Activated T-helper 2 cell treated with anti-CD3 and anti-CD28 coated beads, Interferon-gamma antibody, Interleukin-2, Interleukin-4, amounts not matched to agents 10 μg/mL and 5 μg/mL and 100 μg/mL, durations not matched to agents 14 hours and 24 hours and 36 hours (primary cell): ENCODE measurements at regions of chr9 and their contacts with region 1.

Region 1: GRCh38 chr9:36487482-36488388 is 85.0 kb upstream of the MELK start:
- DNase-seq: peak; percentile 89
- H3K4me3 Mint-ChIP-seq: peak overlapping the region; percentile 90
- H3K27ac Mint-ChIP-seq: peak overlapping the region; percentile 99
- H3K4me1 Mint-ChIP-seq: peaks cover 45% of the 10 kb centered on the region
- H3K27me3 Mint-ChIP-seq: no peaks in the 10 kb centered on the region

Region 2: DNA sequence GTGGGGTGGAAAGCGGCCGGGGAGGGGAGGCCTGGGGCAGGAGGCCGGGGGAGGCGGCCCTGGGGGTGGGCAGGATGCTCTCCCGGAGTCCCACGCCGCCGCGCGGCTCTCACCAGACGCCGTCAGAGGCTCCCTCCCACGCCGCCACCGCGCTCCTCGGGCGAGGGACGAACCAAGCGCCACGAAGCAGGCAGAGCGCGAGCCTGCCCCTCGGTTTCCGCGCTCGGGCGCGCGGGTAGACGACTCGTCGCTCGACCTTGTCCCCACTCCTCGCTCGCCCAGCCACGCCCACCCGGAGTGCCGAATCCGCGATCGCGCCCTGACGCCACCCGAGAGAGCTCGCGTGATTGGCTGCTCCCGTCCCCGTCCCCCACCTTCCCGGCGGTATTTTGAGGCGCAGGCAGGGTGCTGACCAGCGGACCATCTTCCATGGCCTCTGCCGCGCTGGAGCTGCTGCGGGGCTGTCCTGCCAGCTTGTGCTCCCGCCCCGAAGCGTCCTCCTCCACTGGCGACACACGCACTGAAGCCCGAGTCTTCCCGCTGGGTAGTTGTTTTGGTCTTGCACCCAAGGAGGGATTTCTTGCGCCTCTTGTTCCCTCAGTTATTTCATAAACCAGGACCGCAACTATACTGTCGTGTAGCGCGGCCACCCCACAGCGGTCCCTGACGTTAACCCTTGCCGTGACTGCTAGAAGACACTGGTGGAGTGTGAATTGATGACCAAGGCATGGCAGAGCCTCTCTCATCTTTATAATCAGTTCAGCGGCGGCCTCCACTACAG is 229.3 kb before region 1 on chr9 and contains the start of gene GNE:
- intact Hi-C with region 1: loop called (anchors 5 kb)
- DNase-seq: peak; percentile 97
- H3K4me3 Mint-ChIP-seq: peak within 1 kb of the TSS; percentile 86
- H3K27ac Mint-ChIP-seq: peak within 1 kb of the TSS; percentile 84
- H3K4me1 Mint-ChIP-seq: peaks cover 7% of the 10 kb centered on the region
- H3K27me3 Mint-ChIP-seq: no peaks in the 10 kb centered on the region
- total RNA-seq, gene GNE: 27.7 and 28.5 TPM in 2 replicates

Region 3: GRCh38 chr9:36457836-36458429 is 29.8 kb before region 1 on chr9:
- intact Hi-C with region 1: loop called (anchors 2 kb)
- DNase-seq: no peak
- H3K4me3 Mint-ChIP-seq: peak overlapping the region; percentile 32
- H3K27ac Mint-ChIP-seq: peak overlapping the region; percentile 47
- H3K4me1 Mint-ChIP-seq: peaks cover 34% of the 10 kb centered on the region
- H3K27me3 Mint-ChIP-seq: no peaks in the 10 kb centered on the region

Region 4: DNA sequence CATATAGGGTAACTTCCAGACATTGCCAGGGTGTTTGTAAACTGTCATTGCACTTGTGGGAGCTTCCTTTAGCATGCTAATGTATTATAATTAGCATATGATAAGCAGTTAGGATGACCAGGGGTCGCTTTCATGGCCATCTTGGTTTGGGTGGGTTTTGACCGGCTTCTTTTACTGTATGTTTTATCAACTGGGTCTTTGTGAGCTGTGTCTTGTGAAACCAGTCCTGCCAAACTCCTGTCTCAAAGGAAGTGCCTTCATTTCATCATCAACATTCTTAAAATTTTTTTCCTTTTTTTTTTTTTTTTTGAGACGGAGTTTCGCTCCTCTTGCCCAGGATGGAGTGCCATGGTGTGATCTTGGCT is 73.1 kb after region 1 on chr9:
- intact Hi-C with region 1: loop called (anchors 5 kb)
- DNase-seq: no peak
- H3K4me3 Mint-ChIP-seq: no peak overlapping the region
- H3K27ac Mint-ChIP-seq: no peak overlapping the region
- H3K4me1 Mint-ChIP-seq: no peaks in the 10 kb centered on the region
- H3K27me3 Mint-ChIP-seq: no peaks in the 10 kb centered on the region